Activated CD4-positive, alpha-beta T cell treated with anti-CD3 and anti-CD28 coated beads for 36 hours (primary cell): ENCODE measurements at regions of chr10 and their contacts with region 1.

Region 1: DNA sequence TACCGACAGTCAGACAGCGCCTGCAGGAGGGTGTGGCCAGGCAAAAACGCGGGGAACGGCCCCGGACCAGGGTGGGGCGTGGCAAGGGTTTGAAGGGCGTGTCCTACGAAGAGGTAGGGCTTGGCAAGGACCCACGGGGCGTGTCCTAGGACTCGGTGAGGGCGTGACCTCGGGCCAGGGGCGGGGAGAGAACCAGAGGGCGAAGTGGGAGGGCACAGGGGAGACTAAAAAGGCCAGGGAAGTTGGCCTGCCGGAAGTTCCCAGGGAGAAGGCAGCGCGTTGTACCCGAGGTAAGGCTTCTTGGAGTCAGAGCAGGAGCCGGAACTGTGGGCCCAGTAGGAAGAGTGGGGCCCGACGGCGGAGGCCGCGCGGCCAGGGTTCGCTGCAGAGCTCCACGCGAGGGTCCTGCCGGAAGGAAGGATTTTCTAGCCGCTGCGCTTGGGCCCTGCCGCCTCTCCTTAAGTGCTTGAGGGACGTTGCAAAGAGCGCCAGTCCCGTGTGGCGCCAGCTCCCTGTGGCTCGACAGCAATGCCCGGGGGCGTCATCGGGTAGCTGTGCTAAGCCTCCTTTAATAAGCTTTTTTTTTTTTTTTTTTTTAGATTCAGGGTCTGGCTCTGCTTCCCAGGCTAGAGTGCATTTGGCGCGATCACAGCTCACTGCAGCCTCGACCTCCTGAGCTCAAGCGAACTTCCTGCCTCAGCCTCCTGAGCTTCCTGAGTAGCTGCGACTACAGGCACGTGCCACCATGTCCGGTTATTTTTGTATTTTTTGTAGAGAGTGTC is at the start of gene PTER:
- DNase-seq: peak; percentile 99
- ATAC-seq: peak; percentile 99
- H3K4me3 Mint-ChIP-seq: peak within 1 kb of the TSS; percentile 89
- H3K27ac Mint-ChIP-seq: peak within 1 kb of the TSS; percentile 92
- H3K4me1 Mint-ChIP-seq: peaks cover 39% of the 10 kb centered on the region
- H3K27me3 Mint-ChIP-seq: no peaks in the 10 kb centered on the region
- total RNA-seq, gene PTER: 33.1 to 34.5 TPM

Region 2: DNA sequence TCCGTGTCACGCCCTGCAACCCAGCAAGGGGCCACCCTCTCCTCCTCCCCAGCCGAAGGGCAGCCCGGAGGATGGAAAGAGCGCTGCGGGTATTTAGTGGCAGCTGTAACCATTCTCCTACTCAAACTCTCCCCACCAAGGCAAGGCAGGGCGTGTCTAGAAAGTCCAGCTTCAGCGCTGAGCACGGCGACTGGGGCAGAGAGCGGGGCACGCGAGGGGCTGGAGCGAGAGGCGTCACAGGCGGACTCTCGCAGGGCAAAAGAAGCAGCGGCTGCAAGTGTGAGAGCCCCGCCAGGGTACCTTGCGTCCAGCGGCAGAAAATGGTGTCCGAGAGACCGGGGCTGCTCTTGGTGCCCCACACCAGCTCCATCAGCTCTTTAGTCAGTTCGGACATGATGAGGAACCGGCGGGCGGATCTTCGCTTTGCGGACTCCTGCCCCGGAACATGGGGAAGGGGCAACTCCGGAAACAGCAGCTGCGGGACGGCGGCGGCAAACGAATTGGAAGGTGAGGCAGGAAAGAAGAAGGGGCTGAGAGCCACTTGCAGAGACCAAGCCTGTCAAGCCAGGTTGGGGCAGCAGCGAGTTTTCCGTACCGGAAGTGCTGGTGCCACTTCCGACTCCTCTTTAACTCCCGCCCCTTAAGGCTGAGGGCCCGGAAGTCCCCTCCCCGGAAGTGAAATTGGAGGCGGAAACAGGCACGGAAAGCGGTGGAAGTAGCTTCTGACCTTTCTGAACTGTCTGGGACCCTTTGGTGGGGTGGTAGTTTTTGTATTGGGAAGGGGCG is 576.9 kb before region 1 on chr10 and contains the start of gene MINDY3:
- CTCF ChIA-PET with region 1: interaction called, 3 read pairs
- POLR2A ChIA-PET with region 1: no interaction called
- intact Hi-C with region 1: loop called in 1 of 2 experiments (anchors 1 kb)
- DNase-seq: peak; percentile 88
- ATAC-seq: peak; percentile 94
- H3K4me3 Mint-ChIP-seq: peak within 1 kb of the TSS; percentile 88
- H3K27ac Mint-ChIP-seq: peak within 1 kb of the TSS; percentile 93
- H3K4me1 Mint-ChIP-seq: peaks cover 32% of the 10 kb centered on the region
- H3K27me3 Mint-ChIP-seq: peaks cover 10% of the 10 kb centered on the region
- total RNA-seq, gene MINDY3: 11.5 to 12.8 TPM

Region 3: GRCh38 chr10:16271571-16271970 is 165.4 kb before region 1 on chr10:
- CTCF ChIA-PET with region 1: no interaction called
- POLR2A ChIA-PET with region 1: interaction called, 10 read pairs
- intact Hi-C with region 1: no loop called
- DNase-seq: no peak
- ATAC-seq: no peak
- H3K4me3 Mint-ChIP-seq: no peak overlapping the region
- H3K27ac Mint-ChIP-seq: no peak overlapping the region
- H3K4me1 Mint-ChIP-seq: no peaks in the 10 kb centered on the region
- H3K27me3 Mint-ChIP-seq: peaks cover 4% of the 10 kb centered on the region

Region 4: DNA sequence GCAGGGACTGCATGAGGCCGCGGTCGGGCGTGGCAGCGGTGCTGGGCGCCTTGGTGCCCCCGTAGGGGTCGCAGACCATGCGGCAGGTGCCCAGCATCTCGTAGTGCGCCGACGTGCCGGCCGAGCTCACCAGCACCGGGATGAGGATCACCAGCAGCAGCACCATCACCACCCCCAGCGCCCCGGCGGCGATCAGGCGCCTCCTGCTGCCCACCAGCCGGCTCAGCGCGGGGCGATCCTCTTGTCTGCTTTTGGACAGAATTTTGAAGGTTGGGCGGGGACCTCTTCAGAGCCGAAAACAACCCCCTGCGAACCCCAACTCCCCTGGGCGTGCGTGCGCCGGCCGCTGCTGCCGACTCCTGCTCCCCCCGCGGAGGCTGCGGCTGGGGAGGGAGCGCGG is 84.0 kb after region 1 on chr10:
- CTCF ChIA-PET with region 1: interaction called, 6 read pairs
- POLR2A ChIA-PET with region 1: interaction called, 9 read pairs
- intact Hi-C with region 1: loop called in 1 of 2 experiments (anchors 2 kb)
- DNase-seq: peak; percentile 69
- ATAC-seq: peak; percentile 69
- H3K4me3 Mint-ChIP-seq: peak overlapping the region; percentile 44
- H3K27ac Mint-ChIP-seq: no peak overlapping the region
- H3K4me1 Mint-ChIP-seq: peaks cover 9% of the 10 kb centered on the region
- H3K27me3 Mint-ChIP-seq: peaks cover 30% of the 10 kb centered on the region

Region 5: DNA sequence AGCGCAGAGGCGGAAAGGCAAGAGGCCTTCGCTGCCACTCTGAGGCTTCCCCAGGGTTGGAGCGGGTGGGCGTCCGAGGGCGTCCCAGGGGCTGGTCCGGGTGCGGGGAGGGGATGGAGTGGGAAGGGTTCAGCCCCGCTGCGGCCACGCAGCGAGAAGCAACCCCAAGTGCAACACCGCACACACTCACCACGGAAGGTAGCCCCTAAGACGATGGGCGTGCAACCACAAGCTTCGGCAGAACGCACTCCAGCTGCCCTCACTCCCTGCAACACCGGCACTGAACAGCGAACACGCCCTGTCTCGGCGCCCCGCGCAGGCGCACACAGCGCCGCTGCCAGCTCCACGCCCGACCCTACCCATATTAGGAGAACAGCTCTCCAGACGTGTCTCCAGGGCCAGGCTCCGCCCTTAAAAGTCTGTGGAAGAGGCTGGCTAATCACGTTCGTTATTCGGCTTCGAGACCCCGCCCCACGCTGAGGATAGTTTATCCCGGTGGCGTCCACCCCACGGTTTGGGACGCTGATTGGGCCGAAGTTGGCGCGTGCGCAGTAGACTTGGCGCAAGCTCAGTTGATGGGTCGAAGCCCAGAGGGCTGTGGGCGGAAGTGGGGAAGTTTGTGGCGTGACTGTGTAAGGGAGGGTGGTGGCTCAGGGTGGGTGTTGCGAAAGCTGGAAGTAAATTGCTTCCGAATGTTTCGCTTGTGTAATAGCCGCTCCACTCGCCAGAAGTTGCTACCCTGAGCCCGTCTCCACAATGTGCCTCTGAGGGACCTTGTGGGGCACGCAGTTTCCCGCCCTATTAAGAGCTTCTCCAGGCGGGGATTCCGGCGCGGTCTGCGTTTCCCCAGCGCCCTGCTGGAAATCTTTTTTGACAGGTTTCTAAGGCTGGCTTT is 380.4 kb after region 1 on chr10 and contains the start of gene RSU1:
- CTCF ChIA-PET with region 1: no interaction called
- POLR2A ChIA-PET with region 1: no interaction called
- intact Hi-C with region 1: loop called (anchors 1 kb)
- DNase-seq: peak; percentile 100
- ATAC-seq: peak; percentile 99
- H3K4me3 Mint-ChIP-seq: peak within 1 kb of the TSS; percentile 87
- H3K27ac Mint-ChIP-seq: peak within 1 kb of the TSS; percentile 95
- H3K4me1 Mint-ChIP-seq: peaks cover 27% of the 10 kb centered on the region
- H3K27me3 Mint-ChIP-seq: no peaks in the 10 kb centered on the region
- total RNA-seq, gene RSU1: 38.4 to 62.8 TPM

Region 6: DNA sequence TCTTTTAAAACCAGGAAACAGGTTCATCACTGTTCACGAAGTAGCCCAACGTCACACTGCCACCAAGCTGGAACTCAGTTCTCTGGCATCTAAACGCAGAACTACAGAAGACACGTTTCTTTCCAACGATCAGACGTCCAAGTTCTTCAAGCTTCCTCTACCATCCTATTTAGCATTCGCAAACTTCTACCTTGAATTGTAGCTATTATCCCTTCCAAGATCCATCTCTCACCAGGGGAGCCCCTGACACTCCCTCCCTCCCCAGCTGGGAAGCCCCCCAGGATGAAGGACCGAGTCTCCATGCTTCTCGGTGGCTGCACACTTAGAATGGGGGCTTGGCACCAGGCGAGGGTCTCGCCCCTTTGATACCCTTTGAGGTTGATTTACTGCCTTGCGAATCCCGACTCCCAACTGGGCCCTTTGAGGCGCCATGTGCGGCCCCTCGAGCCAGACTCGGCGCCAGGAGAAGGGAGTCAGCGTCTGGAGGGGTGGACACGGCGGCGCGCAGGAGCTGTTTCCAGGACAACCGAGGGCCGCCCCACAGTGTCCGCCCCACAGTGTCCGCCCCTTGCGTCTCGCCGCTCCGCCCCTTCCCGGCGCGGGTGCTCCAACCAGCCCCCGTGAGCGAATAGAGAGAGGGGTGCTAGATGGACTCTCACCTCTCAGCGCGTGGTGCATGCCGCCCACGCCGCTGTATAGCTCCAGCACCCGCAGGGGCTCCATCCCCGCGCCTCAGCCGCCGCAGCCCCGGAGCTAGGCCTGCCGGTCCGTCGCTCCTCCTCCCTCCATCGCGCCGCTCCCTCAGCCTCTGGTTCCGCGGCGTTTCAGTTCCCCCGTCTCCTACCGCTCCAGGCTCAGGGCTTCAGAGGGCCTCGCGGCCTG is 764.2 kb after region 1 on chr10 and contains the start of gene TRDMT1:
- CTCF ChIA-PET with region 1: no interaction called
- POLR2A ChIA-PET with region 1: no interaction called
- intact Hi-C with region 1: loop called in 1 of 2 experiments (anchors 10 kb)
- DNase-seq: peak; percentile 85
- ATAC-seq: peak; percentile 91
- H3K4me3 Mint-ChIP-seq: peak within 1 kb of the TSS; percentile 86
- H3K27ac Mint-ChIP-seq: peak within 1 kb of the TSS; percentile 89
- H3K4me1 Mint-ChIP-seq: peaks cover 46% of the 10 kb centered on the region
- H3K27me3 Mint-ChIP-seq: no peaks in the 10 kb centered on the region
- total RNA-seq, gene TRDMT1: 6.6 to 11.6 TPM